ENCODE measurements at regions of chrX and their contacts with region 1.

Region 1: DNA sequence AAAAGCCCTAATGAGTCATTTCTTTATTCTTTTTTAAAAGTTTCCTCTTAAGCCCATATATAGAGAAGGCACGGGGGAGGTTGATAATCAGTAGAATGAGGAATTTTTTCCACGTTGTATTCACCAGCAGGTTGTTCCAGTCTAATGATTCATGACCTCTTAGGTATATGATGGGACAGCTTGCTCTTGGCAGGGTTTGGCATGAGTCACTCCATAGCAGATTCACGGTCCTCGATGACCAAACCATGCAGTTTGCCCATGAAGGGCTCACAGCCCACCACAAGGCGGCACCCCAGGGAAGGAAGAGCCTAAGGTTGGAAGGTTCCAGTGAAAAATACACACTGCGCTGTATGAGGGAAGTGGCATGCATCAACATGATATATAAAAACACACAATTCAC is 623.8 kb upstream of the DIPK2B start:
- DNase-seq: peak; percentile 88
- H3K4me3 ChIP-seq: no peak overlapping the region
- H3K27ac ChIP-seq: no peak overlapping the region
- H3K4me1 ChIP-seq: no peaks in the 10 kb centered on the region
- H3K27me3 ChIP-seq: no peaks in the 10 kb centered on the region
- CTCF ChIP-seq: peak; percentile 82

Region 2: GRCh38 chrX:45515262-45516215 is 308.9 kb before region 1 on chrX:
- CTCF ChIA-PET with region 1: no interaction called
- POLR2A ChIA-PET with region 1: no interaction called
- intact Hi-C with region 1: loop called (anchors 10 kb)
- DNase-seq: peak; percentile 72
- H3K4me3 ChIP-seq: no peak overlapping the region
- H3K27ac ChIP-seq: peak overlapping the region; percentile 4
- H3K4me1 ChIP-seq: peaks cover 21% of the 10 kb centered on the region
- H3K27me3 ChIP-seq: no peaks in the 10 kb centered on the region
- CTCF ChIP-seq: peak; percentile 80

Region 3: GRCh38 chrX:45801554-45801953 is 22.9 kb before region 1 on chrX:
- CTCF ChIA-PET with region 1: no interaction called
- POLR2A ChIA-PET with region 1: no interaction called
- intact Hi-C with region 1: loop called (anchors 1 kb)
- DNase-seq: peak; percentile 78
- H3K4me3 ChIP-seq: no peak overlapping the region
- H3K27ac ChIP-seq: no peak overlapping the region
- H3K4me1 ChIP-seq: peaks cover 55% of the 10 kb centered on the region
- H3K27me3 ChIP-seq: no peaks in the 10 kb centered on the region
- CTCF ChIP-seq: peak; percentile 55

Region 4: DNA sequence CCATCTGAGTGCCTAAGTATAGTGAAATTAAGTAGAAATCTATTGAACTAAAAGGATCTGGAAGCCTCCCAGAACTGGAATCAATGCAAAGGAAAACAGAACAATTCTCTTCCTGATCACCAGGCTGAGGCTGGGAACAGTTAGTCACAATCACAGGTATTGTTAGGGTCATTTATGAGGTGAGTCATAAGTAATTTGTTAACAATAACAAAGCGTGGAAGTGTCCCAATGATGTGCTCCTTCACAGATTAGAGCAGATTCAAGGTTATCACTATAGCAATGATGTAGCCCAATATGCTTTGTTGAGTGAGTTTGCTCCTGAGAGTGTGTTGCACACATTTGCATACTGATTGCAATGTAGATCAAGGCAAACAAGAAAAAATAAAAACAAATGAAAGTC is 492.7 kb after region 1 on chrX:
- CTCF ChIA-PET with region 1: no interaction called
- POLR2A ChIA-PET with region 1: no interaction called
- intact Hi-C with region 1: loop called (anchors 5 kb)
- DNase-seq: peak; percentile 36
- H3K4me3 ChIP-seq: no peak overlapping the region
- H3K27ac ChIP-seq: peak overlapping the region; percentile 92
- H3K4me1 ChIP-seq: peaks cover 51% of the 10 kb centered on the region
- H3K27me3 ChIP-seq: no peaks in the 10 kb centered on the region
- CTCF ChIP-seq: no peak

Region 5: DNA sequence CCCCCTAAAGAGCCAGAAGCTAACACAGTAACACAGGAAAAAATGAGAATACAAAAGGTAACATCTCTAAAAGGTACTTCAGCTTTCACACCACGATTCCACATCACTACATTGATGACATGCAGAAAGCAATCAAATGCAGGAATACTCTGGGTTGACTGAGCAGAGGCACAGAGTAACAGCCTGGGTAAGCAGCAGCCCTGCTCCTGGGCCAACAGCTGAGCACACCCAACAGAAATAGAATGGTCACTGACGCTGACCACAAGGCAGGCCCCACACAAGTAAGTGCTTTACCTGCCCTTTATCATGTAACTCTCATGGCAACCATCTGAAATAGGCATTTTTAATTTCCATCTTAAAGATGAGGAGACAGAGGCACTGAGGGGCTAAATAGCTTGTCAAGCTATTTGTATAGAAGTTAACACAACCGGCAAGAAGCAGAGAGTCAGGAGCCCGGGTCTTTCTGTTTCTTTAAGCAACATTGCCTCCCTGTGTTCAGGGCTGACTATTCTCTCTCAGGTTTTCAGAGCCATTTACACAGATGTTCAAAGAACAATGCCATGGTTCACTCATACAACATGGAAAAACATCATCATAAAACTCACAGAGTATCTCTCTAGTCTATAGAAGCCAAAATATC is 551.9 kb after region 1 on chrX:
- CTCF ChIA-PET with region 1: interaction called, 4 read pairs
- POLR2A ChIA-PET with region 1: no interaction called
- intact Hi-C with region 1: loop called (anchors 1 kb)
- DNase-seq: peak; percentile 88
- H3K4me3 ChIP-seq: no peak overlapping the region
- H3K27ac ChIP-seq: peak overlapping the region; percentile 31
- H3K4me1 ChIP-seq: peaks cover 26% of the 10 kb centered on the region
- H3K27me3 ChIP-seq: no peaks in the 10 kb centered on the region
- CTCF ChIP-seq: peak; percentile 74

Region 6: GRCh38 chrX:46408553-46409407 is 584.3 kb after region 1 on chrX:
- CTCF ChIA-PET with region 1: no interaction called
- POLR2A ChIA-PET with region 1: no interaction called
- intact Hi-C with region 1: loop called (anchors 5 kb)
- DNase-seq: peak; percentile 84
- H3K4me3 ChIP-seq: no peak overlapping the region
- H3K27ac ChIP-seq: peak overlapping the region; percentile 79
- H3K4me1 ChIP-seq: peaks cover 19% of the 10 kb centered on the region
- H3K27me3 ChIP-seq: no peaks in the 10 kb centered on the region
- CTCF ChIP-seq: peak; percentile 94

Region 7: GRCh38 chrX:46912098-46912602 is 1087.7 kb after region 1 on chrX and contains the start of gene JADE3:
- CTCF ChIA-PET with region 1: no interaction called
- POLR2A ChIA-PET with region 1: no interaction called
- intact Hi-C with region 1: no loop called
- DNase-seq: peak; percentile 84
- H3K4me3 ChIP-seq: peak within 1 kb of the TSS; percentile 78
- H3K27ac ChIP-seq: peak within 1 kb of the TSS; percentile 85
- H3K4me1 ChIP-seq: peaks cover 5% of the 10 kb centered on the region
- H3K27me3 ChIP-seq: no peaks in the 10 kb centered on the region
- CTCF ChIP-seq: no peak
- total RNA-seq, gene JADE3: 42.4 and 48.5 TPM in 2 replicates

Measured in A673 (cell line).